PC-3 (cell line): ENCODE measurements at regions of chr4 and their contacts with region 1.

Region 1: GRCh38 chr4:78622253-78622979 is 70.8 kb downstream of the ANXA3 start:
- DNase-seq: peak; percentile 14
- ATAC-seq: no peak
- H3K4me3 ChIP-seq: no peak overlapping the region
- H3K27ac ChIP-seq: no peak overlapping the region
- H3K4me1 ChIP-seq: peaks cover 12% of the 10 kb centered on the region
- H3K27me3 ChIP-seq: no peaks in the 10 kb centered on the region
- CTCF ChIP-seq: no peak

Region 2: GRCh38 chr4:78524009-78524408 is 98.4 kb before region 1 on chr4:
- CTCF ChIA-PET with region 1: interaction called, 13 read pairs
- POLR2A ChIA-PET with region 1: no interaction called
- intact Hi-C with region 1: no loop called
- DNase-seq: no peak
- ATAC-seq: no peak
- H3K4me3 ChIP-seq: no peak overlapping the region
- H3K27ac ChIP-seq: no peak overlapping the region
- H3K4me1 ChIP-seq: peaks cover 14% of the 10 kb centered on the region
- H3K27me3 ChIP-seq: no peaks in the 10 kb centered on the region
- CTCF ChIP-seq: no peak

Region 3: DNA sequence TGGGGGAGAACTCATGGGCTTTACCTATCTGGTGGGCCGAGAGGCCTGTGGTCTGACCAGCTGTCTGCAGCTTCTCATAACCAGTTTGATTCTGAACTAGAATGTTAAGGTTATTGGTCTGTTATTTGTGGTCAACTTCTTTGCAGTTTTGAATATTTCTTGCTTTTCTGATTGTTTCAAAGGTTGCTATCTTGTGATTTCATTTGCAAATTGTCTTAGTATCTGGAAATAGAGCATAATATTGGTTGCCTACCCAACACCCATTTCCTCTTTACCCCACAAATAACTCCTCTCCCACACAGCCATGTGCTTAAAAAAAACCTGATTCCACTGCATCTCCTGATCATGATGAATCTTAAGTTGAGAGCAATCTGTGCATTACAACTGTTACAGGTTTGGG is 114.6 kb after region 1 on chr4:
- CTCF ChIA-PET with region 1: no interaction called
- POLR2A ChIA-PET with region 1: no interaction called
- intact Hi-C with region 1: no loop called
- DNase-seq: no peak
- ATAC-seq: no peak
- H3K4me3 ChIP-seq: no peak overlapping the region
- H3K27ac ChIP-seq: no peak overlapping the region
- H3K4me1 ChIP-seq: no peaks in the 10 kb centered on the region
- H3K27me3 ChIP-seq: no peaks in the 10 kb centered on the region
- CTCF ChIP-seq: no peak